ENCODE measurements at regions of chr6 and their contacts with region 1.

Region 1: DNA sequence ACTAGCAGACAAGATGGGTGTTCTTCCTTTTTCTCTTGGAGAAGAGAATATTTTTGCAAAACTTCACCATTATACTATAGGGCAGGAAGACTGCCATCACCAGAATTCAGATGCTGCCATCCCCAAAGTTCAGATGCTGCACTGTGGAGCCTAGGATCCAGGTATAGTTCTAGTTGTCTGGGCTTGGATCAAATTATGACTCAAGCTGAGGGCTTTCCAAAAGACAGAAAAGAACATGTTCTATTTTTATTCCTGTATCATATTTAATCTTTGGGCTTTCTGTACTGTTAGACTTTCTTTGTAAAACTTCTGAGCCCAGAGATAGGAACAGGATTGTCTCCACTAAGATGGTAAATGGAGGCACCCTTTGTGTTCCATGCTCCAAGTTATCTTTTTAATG is 22.0 kb downstream of the FAM83B start:
- DNase-seq: no peak
- H3K4me3 ChIP-seq: no peak overlapping the region
- H3K27ac ChIP-seq: no peak overlapping the region
- H3K4me1 ChIP-seq: no peaks in the 10 kb centered on the region
- H3K27me3 ChIP-seq: no peaks in the 10 kb centered on the region
- CTCF ChIP-seq: no peak
- EP300 ChIP-seq: no peak
- POLR2A ChIP-seq: no peak

Region 2: GRCh38 chr6:54481091-54481490 is 387.5 kb before region 1 on chr6:
- intact Hi-C with region 1: no loop called
- DNase-seq: no peak
- H3K4me3 ChIP-seq: no peak overlapping the region
- H3K27ac ChIP-seq: no peak overlapping the region
- H3K4me1 ChIP-seq: no peaks in the 10 kb centered on the region
- H3K27me3 ChIP-seq: no peaks in the 10 kb centered on the region
- CTCF ChIP-seq: no peak
- EP300 ChIP-seq: no peak
- POLR2A ChIP-seq: no peak

Region 3: GRCh38 chr6:54784011-54784410 is 84.5 kb before region 1 on chr6:
- intact Hi-C with region 1: no loop called
- DNase-seq: no peak
- H3K4me3 ChIP-seq: no peak overlapping the region
- H3K27ac ChIP-seq: no peak overlapping the region
- H3K4me1 ChIP-seq: no peaks in the 10 kb centered on the region
- H3K27me3 ChIP-seq: no peaks in the 10 kb centered on the region
- CTCF ChIP-seq: no peak
- EP300 ChIP-seq: no peak
- POLR2A ChIP-seq: no peak

Region 4: GRCh38 chr6:54916862-54917261 is 48.3 kb after region 1 on chr6:
- intact Hi-C with region 1: loop called in 1 of 4 experiments (anchors 2 kb)
- DNase-seq: no peak
- H3K4me3 ChIP-seq: no peak overlapping the region
- H3K27ac ChIP-seq: no peak overlapping the region
- H3K4me1 ChIP-seq: no peaks in the 10 kb centered on the region
- H3K27me3 ChIP-seq: no peaks in the 10 kb centered on the region
- CTCF ChIP-seq: no peak
- EP300 ChIP-seq: no peak
- POLR2A ChIP-seq: no peak

Measured in ovary (tissue), 10 donors.